ENCODE measurements at regions of chr12 and their contacts with region 1.

Region 1: GRCh38 chr12:121697098-121697698 is 15.4 kb upstream of the TMEM120B start:
- DNase-seq: no peak
- H3K4me3 ChIP-seq: no peak overlapping the region
- H3K27ac ChIP-seq: no peak overlapping the region
- H3K4me1 ChIP-seq: peaks cover 4% of the 10 kb centered on the region
- H3K27me3 ChIP-seq: no peaks in the 10 kb centered on the region
- CTCF ChIP-seq: peak; percentile 68

Region 2: DNA sequence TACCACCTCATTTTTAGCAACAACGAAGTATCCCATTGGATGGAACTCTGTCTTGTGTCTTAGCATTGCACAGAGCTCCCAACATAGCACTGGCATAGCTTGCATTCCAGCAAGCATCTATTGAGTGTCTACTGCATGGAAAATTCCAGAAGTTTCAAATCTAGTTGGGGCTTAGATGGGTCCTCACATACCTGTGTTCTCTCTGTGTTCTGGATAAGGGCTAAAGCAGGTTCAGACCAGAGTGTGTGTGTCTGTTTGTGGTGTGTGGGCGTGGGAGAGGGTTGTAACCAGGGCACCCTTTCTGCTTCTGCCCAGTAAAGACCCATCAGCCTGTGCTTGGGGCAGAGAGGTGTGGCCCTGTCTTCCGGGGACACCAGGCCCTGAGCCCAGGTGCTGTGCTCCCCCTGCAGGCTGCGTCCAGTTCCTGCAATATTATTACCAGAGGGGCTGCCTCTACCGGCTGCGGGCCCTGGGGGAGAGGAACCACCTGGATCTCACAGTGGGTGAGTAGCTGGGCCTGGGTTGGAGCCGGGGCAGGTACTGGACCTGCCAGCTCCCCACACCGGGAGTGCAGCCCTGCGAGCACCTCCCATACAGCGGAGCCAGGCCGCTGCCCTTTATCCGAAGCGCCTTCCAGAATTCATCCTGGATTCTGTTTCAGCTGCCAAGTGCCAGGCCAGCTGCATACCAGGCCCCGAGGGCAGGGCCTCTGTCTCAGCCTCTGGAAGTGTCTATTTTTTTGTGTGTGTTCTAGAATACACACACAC is 76.0 kb after region 1 on chr12:
- intact Hi-C with region 1: loop called (anchors 5 kb)
- DNase-seq: peak; percentile 58
- H3K4me3 ChIP-seq: peak overlapping the region; percentile 15
- H3K27ac ChIP-seq: peak overlapping the region; percentile 73
- H3K4me1 ChIP-seq: peaks cover 77% of the 10 kb centered on the region
- H3K27me3 ChIP-seq: no peaks in the 10 kb centered on the region
- CTCF ChIP-seq: peak; percentile 84

Region 3: GRCh38 chr12:121793838-121794533 is 96.8 kb after region 1 on chr12:
- intact Hi-C with region 1: loop called (anchors 5 kb)
- DNase-seq: peak; percentile 90
- H3K4me3 ChIP-seq: peak overlapping the region; percentile 75
- H3K27ac ChIP-seq: peak overlapping the region; percentile 100
- H3K4me1 ChIP-seq: peaks cover 93% of the 10 kb centered on the region
- H3K27me3 ChIP-seq: no peaks in the 10 kb centered on the region
- CTCF ChIP-seq: peak; percentile 99